Calu3 (cell line): ENCODE measurements at regions of chr11 and their contacts with region 1.

Region 1: GRCh38 chr11:67373925-67374618 is 674 bp upstream of the CLCF1 start:
- DNase-seq: peak; percentile 96
- H3K4me3 Mint-ChIP-seq: peak overlapping the region; percentile 71
- H3K27ac Mint-ChIP-seq: peak overlapping the region; percentile 75
- H3K4me1 Mint-ChIP-seq: peaks cover 47% of the 10 kb centered on the region
- H3K27me3 Mint-ChIP-seq: no peaks in the 10 kb centered on the region
- CTCF ChIP-seq: peak; percentile 56

Region 2: GRCh38 chr11:67202045-67202444 is 172.0 kb before region 1 on chr11:
- CTCF ChIA-PET with region 1: no interaction called
- intact Hi-C with region 1: no loop called
- DNase-seq: no peak
- H3K4me3 Mint-ChIP-seq: no peak overlapping the region
- H3K27ac Mint-ChIP-seq: no peak overlapping the region
- H3K4me1 Mint-ChIP-seq: no peaks in the 10 kb centered on the region
- H3K27me3 Mint-ChIP-seq: no peaks in the 10 kb centered on the region
- CTCF ChIP-seq: no peak

Region 3: DNA sequence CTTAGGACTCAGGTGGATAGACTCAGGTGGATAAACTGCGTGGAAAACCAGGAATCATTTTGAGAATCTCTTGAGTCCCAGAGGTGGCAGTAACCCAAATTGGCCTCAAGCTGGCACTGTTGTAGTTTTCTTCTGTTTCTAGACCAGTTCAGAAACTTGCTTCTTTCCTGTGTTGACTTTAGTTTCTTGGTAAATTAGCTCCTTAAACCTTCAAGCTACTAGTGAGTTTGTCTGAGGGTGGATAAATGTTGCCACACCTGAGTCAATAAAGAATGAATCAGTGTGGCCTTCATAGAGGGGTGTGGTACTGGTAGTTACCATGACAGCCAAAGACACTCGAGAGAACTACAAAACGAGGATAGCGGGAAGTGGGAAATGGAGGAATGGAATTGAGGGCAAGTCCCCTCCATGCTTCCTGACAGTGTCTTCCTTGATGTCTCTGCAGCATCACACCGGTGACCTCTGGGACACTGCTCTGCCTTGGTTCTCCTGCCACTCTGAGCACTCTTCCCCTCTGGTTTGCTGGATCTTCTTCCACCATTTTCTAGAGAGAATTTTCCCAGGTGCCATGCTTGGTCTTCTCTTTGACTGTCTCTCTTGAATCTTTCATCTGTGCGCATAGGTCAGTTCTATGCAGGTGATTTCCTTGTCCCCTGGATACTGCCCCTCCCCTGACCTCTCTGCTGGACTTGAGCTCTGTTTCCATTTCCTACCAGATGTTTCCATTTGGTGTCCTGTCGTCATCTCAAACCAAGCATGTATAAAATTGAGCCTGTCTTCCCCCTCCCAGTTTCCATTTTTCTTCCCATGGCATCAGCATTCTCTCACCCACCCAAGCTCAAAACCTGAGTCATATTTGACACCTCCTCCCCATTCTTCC is 27.9 kb before region 1 on chr11:
- CTCF ChIA-PET with region 1: interaction called, 46 read pairs
- intact Hi-C with region 1: no loop called
- DNase-seq: peak; percentile 77
- H3K4me3 Mint-ChIP-seq: peak overlapping the region; percentile 21
- H3K27ac Mint-ChIP-seq: peak overlapping the region; percentile 96
- H3K4me1 Mint-ChIP-seq: peaks cover 55% of the 10 kb centered on the region
- H3K27me3 Mint-ChIP-seq: no peaks in the 10 kb centered on the region
- CTCF ChIP-seq: peak; percentile 84